ENCODE measurements at regions of chr2 and their contacts with region 1.

Region 1: GRCh38 chr2:38728694-38729093 is 22.5 kb downstream of the SRSF7 start:
- DNase-seq: no peak
- H3K4me3 ChIP-seq: no peak overlapping the region
- H3K27ac ChIP-seq: no peak overlapping the region
- H3K4me1 ChIP-seq: peaks cover 0 to 5% (median 0%) of the 10 kb centered on the region in 4 donors
- H3K27me3 ChIP-seq: no peaks in the 10 kb centered on the region
- CTCF ChIP-seq: no peak
- EP300 ChIP-seq: no peak
- POLR2A ChIP-seq: no peak

Region 2: DNA sequence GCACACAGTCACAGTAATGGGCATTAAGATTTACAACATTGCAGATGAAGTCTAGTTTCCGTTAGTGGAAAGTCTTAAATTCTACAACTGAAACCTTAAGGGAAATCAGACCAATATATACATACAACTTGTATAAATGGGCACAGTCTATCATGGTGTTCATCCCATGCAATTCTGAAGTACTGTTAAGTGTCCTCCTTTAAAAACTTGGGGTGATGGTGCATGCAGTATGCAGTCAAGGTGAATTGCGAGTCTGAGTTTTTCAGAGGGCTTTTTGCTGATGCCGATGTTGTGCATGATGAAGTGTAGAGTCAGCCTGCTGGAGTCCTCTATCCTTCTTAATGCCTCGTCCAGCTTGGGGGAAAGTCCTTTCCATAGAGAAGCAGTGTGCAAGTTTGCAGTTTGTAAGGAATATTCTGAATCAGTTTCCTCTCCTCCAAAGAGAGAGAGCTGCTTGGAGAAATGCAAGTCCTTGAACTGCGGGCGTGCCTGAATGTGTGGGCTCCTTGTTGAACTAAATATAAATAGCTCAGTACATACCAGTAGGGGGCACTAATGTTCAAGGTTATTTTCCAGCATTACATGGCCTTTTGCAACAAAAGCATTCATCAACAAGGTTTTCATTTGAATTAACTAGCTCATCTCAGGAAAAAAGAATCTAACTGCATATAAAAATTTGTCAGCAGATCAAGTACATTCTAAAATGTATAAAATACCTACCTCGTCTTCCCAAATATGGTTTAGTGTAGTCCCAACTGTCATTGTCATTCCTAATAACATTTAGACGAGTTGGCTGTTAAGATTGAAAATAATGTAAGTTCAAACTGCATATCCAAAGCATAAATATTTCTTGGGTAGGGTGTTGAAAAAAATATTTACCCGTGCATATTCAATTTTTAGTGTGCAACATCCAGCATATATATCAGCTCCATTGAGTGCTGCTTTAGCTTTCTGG is 147.2 kb before region 1 on chr2:
- intact Hi-C with region 1: loop called (anchors 5 kb)
- DNase-seq: peak in 1 of 2 donors; percentile 90
- H3K4me3 ChIP-seq: no peak overlapping the region
- H3K27ac ChIP-seq: no peak overlapping the region
- H3K4me1 ChIP-seq: peaks cover under 1 to 37% (median 19%) of the 10 kb centered on the region in 4 donors
- H3K27me3 ChIP-seq: no peaks in the 10 kb centered on the region
- CTCF ChIP-seq: peak in 5 of 7 experiments; percentile 36 to 74 (median 65)
- EP300 ChIP-seq: no peak
- POLR2A ChIP-seq: no peak

Measured in stomach (tissue), 19 donors.